ENCODE measurements at regions of chr12 and their contacts with region 1.

Region 1: GRCh38 chr12:90013409-90013808 is 304.8 kb upstream of the ATP2B1 start:
- DNase-seq: no peak
- H3K4me3 ChIP-seq: no peak overlapping the region
- H3K27ac ChIP-seq: no peak overlapping the region
- H3K4me1 ChIP-seq: peaks cover 10% of the 10 kb centered on the region
- H3K27me3 ChIP-seq: no peaks in the 10 kb centered on the region
- CTCF ChIP-seq: peak in 1 of 2 donors; percentile 29

Region 2: DNA sequence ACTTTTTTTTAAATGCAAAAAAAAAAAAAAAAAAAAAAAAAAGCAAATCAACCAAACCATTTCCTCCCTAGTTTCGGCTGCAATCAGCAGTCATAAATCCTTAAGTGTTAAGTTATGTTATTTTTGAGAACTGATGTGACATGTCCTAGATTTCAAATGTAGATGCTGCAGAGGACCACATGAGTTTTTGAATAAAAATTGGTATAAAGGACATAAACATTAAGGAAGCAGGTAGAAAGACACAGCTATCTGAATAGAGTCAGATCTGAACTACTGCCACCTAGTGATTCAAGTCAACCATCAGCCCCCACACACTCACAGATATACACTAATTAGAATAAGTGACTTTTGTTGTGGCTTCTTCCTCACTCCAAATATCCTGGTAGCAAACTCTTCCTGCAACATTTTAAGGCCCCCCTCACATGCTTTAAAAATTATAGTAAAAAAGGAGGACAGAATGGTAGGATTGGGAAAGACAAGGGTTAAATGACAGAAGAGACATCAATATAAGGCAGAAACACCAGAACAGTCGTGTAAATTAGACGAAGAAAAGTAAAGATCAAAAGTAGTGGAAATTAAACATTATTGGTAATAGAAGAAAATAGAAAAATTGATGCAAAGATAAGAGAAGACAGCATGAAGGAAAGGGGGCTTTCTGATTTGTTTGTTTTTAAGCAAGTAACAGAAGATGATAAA is 89.7 kb after region 1 on chr12:
- CTCF ChIA-PET with region 1: interaction called, 9 read pairs
- dilution Hi-C with region 1: no loop called
- in situ Hi-C with region 1: no loop called
- intact Hi-C with region 1: loop called (anchors 1 kb)
- DNase-seq: peak; percentile 43
- H3K4me3 ChIP-seq: no peak overlapping the region
- H3K27ac ChIP-seq: no peak overlapping the region
- H3K4me1 ChIP-seq: peaks cover 20% of the 10 kb centered on the region
- H3K27me3 ChIP-seq: no peaks in the 10 kb centered on the region
- CTCF ChIP-seq: peak; percentile 44 to 75

Region 3: GRCh38 chr12:90253674-90254181 is 240.3 kb after region 1 on chr12:
- CTCF ChIA-PET with region 1: no interaction called
- dilution Hi-C with region 1: no loop called
- in situ Hi-C with region 1: no loop called
- intact Hi-C with region 1: loop called (anchors 1 kb)
- DNase-seq: peak; percentile 97
- H3K4me3 ChIP-seq: no peak overlapping the region
- H3K27ac ChIP-seq: peak overlapping the region; percentile 45
- H3K4me1 ChIP-seq: peaks cover 24% of the 10 kb centered on the region
- H3K27me3 ChIP-seq: no peaks in the 10 kb centered on the region
- CTCF ChIP-seq: peak; percentile 46 to 55

Region 4: GRCh38 chr12:90854136-90854689 is 840.8 kb after region 1 on chr12:
- CTCF ChIA-PET with region 1: no interaction called
- dilution Hi-C with region 1: no loop called
- in situ Hi-C with region 1: no loop called
- intact Hi-C with region 1: loop called (anchors 5 kb)
- DNase-seq: peak; percentile 25
- H3K4me3 ChIP-seq: no peak overlapping the region
- H3K27ac ChIP-seq: no peak overlapping the region
- H3K4me1 ChIP-seq: no peaks in the 10 kb centered on the region
- H3K27me3 ChIP-seq: no peaks in the 10 kb centered on the region
- CTCF ChIP-seq: peak; percentile 78 to 81